AG04450 (cell line): ENCODE measurements at regions of chr1 and their contacts with region 1.

Region 1: GRCh38 chr1:184664042-184664655 is 90.5 kb downstream of the EDEM3 start:
- DNase-seq: peak; percentile 27
- H3K4me3 ChIP-seq: peak overlapping the region; percentile 57
- H3K27ac ChIP-seq: no peak overlapping the region
- H3K27me3 ChIP-seq: peaks cover 6% of the 10 kb centered on the region
- CTCF ChIP-seq: peak; percentile 95

Region 2: GRCh38 chr1:184056921-184057496 is 607.1 kb before region 1 on chr1:
- CTCF ChIA-PET with region 1: interaction called, 11 read pairs
- POLR2A ChIA-PET with region 1: interaction called, 3 read pairs
- DNase-seq: peak; percentile 75
- H3K4me3 ChIP-seq: no peak overlapping the region
- H3K27ac ChIP-seq: peak overlapping the region; percentile 23
- H3K27me3 ChIP-seq: no peaks in the 10 kb centered on the region
- CTCF ChIP-seq: no peak

Region 3: DNA sequence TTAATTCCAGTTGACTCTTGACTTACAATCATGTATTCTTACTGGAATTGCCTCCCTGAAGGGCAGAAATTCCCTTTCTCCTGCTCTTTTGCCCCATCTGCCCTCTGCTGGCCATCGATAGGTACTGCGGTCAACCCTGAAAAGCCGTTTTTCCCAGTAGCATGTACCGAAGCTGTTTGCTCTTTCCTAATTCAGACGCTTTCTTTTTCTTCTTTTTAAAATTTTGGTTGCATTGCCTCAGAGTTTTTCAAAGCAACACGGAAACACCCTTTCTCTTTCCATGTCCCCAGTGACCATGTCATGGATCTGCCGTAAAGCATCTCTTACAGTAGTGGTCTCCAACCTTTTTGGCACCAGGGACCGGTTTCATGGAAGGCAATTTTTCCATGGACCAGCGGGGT is 441.5 kb before region 1 on chr1:
- CTCF ChIA-PET with region 1: interaction called, 11 read pairs
- POLR2A ChIA-PET with region 1: no interaction called
- DNase-seq: no peak
- H3K4me3 ChIP-seq: peak overlapping the region; percentile 32
- H3K27ac ChIP-seq: no peak overlapping the region
- H3K27me3 ChIP-seq: peaks cover 2% of the 10 kb centered on the region
- CTCF ChIP-seq: peak; percentile 97

Region 4: DNA sequence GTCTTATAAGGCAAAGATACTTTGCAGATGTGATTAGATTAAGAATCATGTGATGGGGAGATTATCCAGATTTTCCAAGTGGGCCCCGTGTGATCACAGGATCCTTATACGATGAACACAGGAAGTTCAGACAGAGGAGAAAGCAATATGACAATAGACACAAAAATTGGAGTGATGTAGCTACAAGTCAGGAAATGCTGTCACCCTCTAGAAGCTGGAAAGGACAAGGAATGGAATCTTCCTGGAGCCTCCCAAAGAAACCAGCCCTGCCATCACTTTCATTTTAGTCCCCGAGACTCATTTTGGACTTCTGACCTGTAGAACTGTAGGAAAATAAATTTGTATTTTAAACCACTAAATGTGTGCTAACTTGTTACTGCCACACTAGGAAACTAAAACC is 339.2 kb before region 1 on chr1:
- CTCF ChIA-PET with region 1: no interaction called
- POLR2A ChIA-PET with region 1: no interaction called
- DNase-seq: no peak
- H3K4me3 ChIP-seq: no peak overlapping the region
- H3K27ac ChIP-seq: no peak overlapping the region
- H3K27me3 ChIP-seq: no peaks in the 10 kb centered on the region
- CTCF ChIP-seq: no peak

Region 5: GRCh38 chr1:184386312-184387068 is 277.7 kb before region 1 on chr1 and contains the start of gene C1orf21:
- CTCF ChIA-PET with region 1: interaction called, 24 read pairs
- POLR2A ChIA-PET with region 1: interaction called, 3 read pairs
- DNase-seq: peak; percentile 72
- H3K4me3 ChIP-seq: peak within 1 kb of the TSS; percentile 75
- H3K27ac ChIP-seq: peak within 1 kb of the TSS; percentile 39
- H3K27me3 ChIP-seq: no peaks in the 10 kb centered on the region
- CTCF ChIP-seq: no peak
- polyA plus RNA-seq, gene C1orf21: 21.0 and 29.5 TPM in 2 replicates

Region 6: GRCh38 chr1:184419728-184420161 is 244.4 kb before region 1 on chr1:
- CTCF ChIA-PET with region 1: interaction called, 10 read pairs
- POLR2A ChIA-PET with region 1: no interaction called
- DNase-seq: no peak
- H3K4me3 ChIP-seq: no peak overlapping the region
- H3K27ac ChIP-seq: peak overlapping the region; percentile 35
- H3K27me3 ChIP-seq: no peaks in the 10 kb centered on the region
- CTCF ChIP-seq: no peak

Region 7: GRCh38 chr1:184649451-184649888 is 14.7 kb before region 1 on chr1:
- CTCF ChIA-PET with region 1: interaction called, 41 read pairs
- POLR2A ChIA-PET with region 1: no interaction called
- DNase-seq: no peak
- H3K4me3 ChIP-seq: no peak overlapping the region
- H3K27ac ChIP-seq: no peak overlapping the region
- H3K27me3 ChIP-seq: no peaks in the 10 kb centered on the region
- CTCF ChIP-seq: no peak

Region 8: DNA sequence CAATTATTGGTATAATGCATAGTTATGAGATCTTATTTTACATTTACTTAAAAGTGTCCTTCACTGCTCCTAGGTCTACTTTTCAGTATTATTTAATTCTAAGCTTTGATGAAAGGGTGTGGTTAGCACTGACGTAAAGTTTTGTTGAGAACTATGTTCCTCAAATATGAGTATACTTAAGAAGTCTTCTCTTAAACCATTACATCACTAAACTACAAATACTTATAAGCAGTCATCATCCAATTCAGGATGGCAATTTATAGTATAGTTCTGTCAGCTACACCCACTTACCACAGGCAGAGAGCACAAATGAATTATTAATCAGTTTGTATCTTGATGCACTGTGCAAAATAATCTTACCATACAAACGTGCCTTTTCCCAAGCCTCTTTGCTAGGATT is 465.6 kb after region 1 on chr1:
- CTCF ChIA-PET with region 1: no interaction called
- POLR2A ChIA-PET with region 1: no interaction called
- DNase-seq: no peak
- H3K4me3 ChIP-seq: no peak overlapping the region
- H3K27ac ChIP-seq: no peak overlapping the region
- H3K27me3 ChIP-seq: no peaks in the 10 kb centered on the region
- CTCF ChIP-seq: no peak